Calu3 (cell line): ENCODE measurements at regions of chr16 and their contacts with region 1.

Region 1: GRCh38 chr16:16127469-16128116 is 95.7 kb downstream of the ABCC6 start:
- DNase-seq: peak; percentile 84
- H3K4me3 Mint-ChIP-seq: no peak overlapping the region
- H3K27ac Mint-ChIP-seq: no peak overlapping the region
- H3K4me1 Mint-ChIP-seq: no peaks in the 10 kb centered on the region
- H3K27me3 Mint-ChIP-seq: no peaks in the 10 kb centered on the region
- CTCF ChIP-seq: peak; percentile 92

Region 2: GRCh38 chr16:15874745-15875314 is 252.8 kb before region 1 on chr16:
- CTCF ChIA-PET with region 1: interaction called, 4 read pairs
- intact Hi-C with region 1: loop called (anchors 1 kb)
- DNase-seq: peak; percentile 68
- H3K4me3 Mint-ChIP-seq: no peak overlapping the region
- H3K27ac Mint-ChIP-seq: no peak overlapping the region
- H3K4me1 Mint-ChIP-seq: peaks cover 16% of the 10 kb centered on the region
- H3K27me3 Mint-ChIP-seq: no peaks in the 10 kb centered on the region
- CTCF ChIP-seq: peak; percentile 61

Region 3: DNA sequence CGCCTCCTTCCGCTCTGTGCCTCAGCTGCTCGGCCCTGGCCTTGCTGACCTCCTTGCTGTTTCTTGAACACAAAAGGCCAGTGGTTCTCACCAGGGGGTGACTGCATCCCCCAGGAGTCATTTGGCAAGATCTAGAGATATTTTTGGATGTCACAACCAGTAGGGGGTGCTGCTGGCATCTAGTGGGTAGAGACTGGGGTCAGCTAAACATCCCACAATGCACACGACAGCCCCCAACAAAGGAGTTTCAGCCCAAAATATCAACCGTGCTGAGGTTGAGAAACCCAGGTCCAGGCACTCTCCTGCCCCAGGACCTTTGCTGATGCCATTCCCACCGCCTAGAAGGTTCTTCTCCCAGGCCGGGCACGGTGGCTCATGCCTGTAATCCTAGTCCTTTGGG is 56.0 kb after region 1 on chr16:
- CTCF ChIA-PET with region 1: no interaction called
- intact Hi-C with region 1: no loop called
- DNase-seq: no peak
- H3K4me3 Mint-ChIP-seq: no peak overlapping the region
- H3K27ac Mint-ChIP-seq: no peak overlapping the region
- H3K4me1 Mint-ChIP-seq: no peaks in the 10 kb centered on the region
- H3K27me3 Mint-ChIP-seq: no peaks in the 10 kb centered on the region
- CTCF ChIP-seq: no peak